AG04449 (cell line): ENCODE measurements at regions of chr6 and their contacts with region 1.

Region 1: DNA sequence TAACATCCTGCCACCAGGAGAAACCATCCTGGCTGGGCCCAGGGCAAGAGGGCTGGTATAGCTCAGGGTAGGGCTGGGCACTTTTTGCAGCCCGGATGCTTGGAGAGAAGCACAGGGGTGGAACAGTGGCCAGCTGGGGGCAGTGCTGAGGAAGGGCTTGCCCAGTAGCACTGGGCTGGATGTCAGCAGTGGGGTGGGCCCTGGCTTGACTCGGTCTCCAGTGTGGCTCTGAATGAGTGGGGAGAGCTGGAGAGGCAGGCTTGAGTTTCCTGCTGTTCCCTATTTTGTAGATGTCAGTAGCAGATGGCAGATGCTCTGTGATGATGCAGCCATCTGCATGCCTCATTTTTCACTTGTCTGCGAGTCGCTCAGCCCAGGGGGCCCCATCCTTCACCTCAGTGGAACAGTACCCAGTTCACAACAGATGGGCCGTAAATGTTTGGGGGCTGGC is 56.3 kb upstream of the TULP1 start:
- DNase-seq: no peak
- H3K4me3 ChIP-seq: no peak overlapping the region
- CTCF ChIP-seq: peak; percentile 43

Region 2: GRCh38 chr6:35687658-35688580 is 118.9 kb after region 1 on chr6:
- CTCF ChIA-PET with region 1: interaction called, 11 read pairs
- POLR2A ChIA-PET with region 1: no interaction called
- DNase-seq: no peak
- H3K4me3 ChIP-seq: peak overlapping the region; percentile 70
- CTCF ChIP-seq: no peak